CD4-positive, alpha-beta T cell (primary cell): ENCODE measurements at regions of chr22 and their contacts with region 1.

Region 1: GRCh38 chr22:45389521-45389920 is 23.9 kb downstream of the SMC1B start:
- DNase-seq: no peak
- ATAC-seq: no peak
- H3K4me3 ChIP-seq: no peak overlapping the region
- H3K4me3 Mint-ChIP-seq: no peak overlapping the region
- H3K27ac ChIP-seq: no peak overlapping the region
- H3K27ac Mint-ChIP-seq: no peak overlapping the region
- H3K4me1 ChIP-seq: no peaks in the 10 kb centered on the region
- H3K4me1 Mint-ChIP-seq: no peaks in the 10 kb centered on the region
- H3K27me3 ChIP-seq: no peaks in the 10 kb centered on the region
- H3K27me3 Mint-ChIP-seq: peaks cover 4% of the 10 kb centered on the region
- CTCF ChIP-seq: no peak

Region 2: GRCh38 chr22:45082795-45083194 is 306.7 kb before region 1 on chr22:
- CTCF ChIA-PET with region 1: no interaction called
- POLR2A ChIA-PET with region 1: no interaction called
- intact Hi-C with region 1: no loop called
- DNase-seq: no peak
- ATAC-seq: no peak
- H3K4me3 ChIP-seq: no peak overlapping the region
- H3K4me3 Mint-ChIP-seq: no peak overlapping the region
- H3K27ac ChIP-seq: no peak overlapping the region
- H3K27ac Mint-ChIP-seq: no peak overlapping the region
- H3K4me1 ChIP-seq: no peaks in the 10 kb centered on the region
- H3K4me1 Mint-ChIP-seq: no peaks in the 10 kb centered on the region
- H3K27me3 ChIP-seq: peaks cover 7 to 11% of the 10 kb centered on the region in 2 experiments
- H3K27me3 Mint-ChIP-seq: peaks cover 31% of the 10 kb centered on the region
- CTCF ChIP-seq: no peak

Region 3: GRCh38 chr22:45332001-45332400 is 57.5 kb before region 1 on chr22:
- CTCF ChIA-PET with region 1: no interaction called
- POLR2A ChIA-PET with region 1: no interaction called
- intact Hi-C with region 1: loop called in 1 of 2 experiments (anchors 2 kb)
- DNase-seq: no peak
- ATAC-seq: no peak
- H3K4me3 ChIP-seq: no peak overlapping the region
- H3K4me3 Mint-ChIP-seq: no peak overlapping the region
- H3K27ac ChIP-seq: no peak overlapping the region
- H3K27ac Mint-ChIP-seq: no peak overlapping the region
- H3K4me1 ChIP-seq: peaks cover 8% of the 10 kb centered on the region
- H3K4me1 Mint-ChIP-seq: peaks cover 34% of the 10 kb centered on the region
- H3K27me3 ChIP-seq: no peaks in the 10 kb centered on the region
- H3K27me3 Mint-ChIP-seq: no peaks in the 10 kb centered on the region
- CTCF ChIP-seq: no peak

Region 4: DNA sequence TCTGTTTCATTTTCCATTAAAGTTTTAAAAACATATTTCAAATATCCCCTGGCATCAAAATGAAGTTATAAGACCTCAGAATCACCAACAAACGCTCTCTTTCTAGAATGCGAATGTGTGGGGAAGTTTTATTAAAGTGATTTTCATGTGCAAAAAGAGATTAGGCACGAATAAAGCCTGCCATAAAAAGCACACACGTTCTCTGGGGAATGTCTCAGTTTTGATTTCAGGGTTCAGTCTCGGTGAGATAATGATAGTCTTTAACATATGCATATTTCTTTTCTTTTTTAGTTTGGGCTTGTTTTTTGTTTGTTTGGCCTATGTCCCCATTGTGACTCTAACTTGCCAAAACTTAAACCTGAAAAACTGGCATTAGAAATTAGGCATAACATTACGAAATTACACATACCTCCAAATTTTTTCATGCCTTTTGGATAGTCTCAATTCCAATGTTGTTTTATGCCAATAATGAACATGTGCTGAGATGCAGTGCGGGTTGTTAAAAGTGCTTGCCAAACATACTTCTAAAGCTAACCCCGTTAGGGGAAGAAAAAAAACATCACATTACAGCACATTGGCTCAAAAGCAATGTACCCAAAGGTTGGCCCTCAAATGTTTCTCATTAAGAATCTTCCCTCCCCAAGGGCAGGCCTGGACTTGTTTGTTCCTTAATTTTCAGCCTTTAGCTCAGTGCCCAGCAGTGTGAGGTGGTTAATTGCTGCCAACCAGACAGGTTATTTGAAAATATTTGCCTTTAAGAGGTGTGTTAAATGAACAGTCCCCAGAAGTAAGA is 80.0 kb after region 1 on chr22:
- CTCF ChIA-PET with region 1: no interaction called
- POLR2A ChIA-PET with region 1: no interaction called
- intact Hi-C with region 1: no loop called
- DNase-seq: no peak
- ATAC-seq: no peak
- H3K4me3 ChIP-seq: no peak overlapping the region
- H3K4me3 Mint-ChIP-seq: no peak overlapping the region
- H3K27ac ChIP-seq: no peak overlapping the region
- H3K27ac Mint-ChIP-seq: no peak overlapping the region
- H3K4me1 ChIP-seq: no peaks in the 10 kb centered on the region
- H3K4me1 Mint-ChIP-seq: no peaks in the 10 kb centered on the region
- H3K27me3 ChIP-seq: peaks cover 0 to 2% of the 10 kb centered on the region in 2 experiments
- H3K27me3 Mint-ChIP-seq: no peaks in the 10 kb centered on the region
- CTCF ChIP-seq: no peak